PC-3 (cell line): ENCODE measurements at regions of chr11 and their contacts with region 1.

Region 1: DNA sequence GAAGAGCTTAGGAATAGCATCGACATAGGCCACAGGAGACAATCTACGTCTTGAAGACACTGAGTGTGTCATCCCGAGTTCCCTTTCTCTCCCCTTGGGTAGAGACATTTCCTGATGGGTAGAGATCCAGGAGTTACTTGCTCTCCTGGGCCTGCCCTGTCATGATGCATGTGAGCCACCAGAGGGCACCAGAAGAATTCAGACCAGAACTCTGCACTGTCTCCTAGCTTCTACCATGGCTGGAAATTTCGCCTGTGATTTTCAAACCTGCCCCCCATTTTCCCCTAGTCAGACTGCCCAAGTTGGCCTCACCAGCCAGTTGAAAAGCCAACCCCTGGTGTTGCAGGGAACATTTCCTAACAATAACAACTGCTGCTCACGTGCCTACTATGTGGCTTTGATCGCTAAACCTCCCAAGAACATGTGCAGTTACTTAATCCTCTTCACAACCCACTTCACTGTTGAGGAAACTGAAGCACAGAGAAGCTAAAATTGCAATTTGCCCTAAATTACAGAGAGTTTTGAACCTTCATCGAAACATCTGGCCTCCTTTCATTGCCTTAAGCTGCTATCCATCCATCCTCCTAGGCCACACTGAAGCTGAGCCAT is 47.2 kb downstream of the C11orf58 start:
- DNase-seq: peak; percentile 71
- ATAC-seq: peak; percentile 39
- H3K4me3 ChIP-seq: no peak overlapping the region
- H3K27ac ChIP-seq: no peak overlapping the region
- H3K4me1 ChIP-seq: peaks cover 37% of the 10 kb centered on the region
- H3K27me3 ChIP-seq: no peaks in the 10 kb centered on the region
- CTCF ChIP-seq: peak; percentile 83

Region 2: GRCh38 chr11:16820324-16821092 is 34.9 kb after region 1 on chr11:
- CTCF ChIA-PET with region 1: interaction called, 4 read pairs
- POLR2A ChIA-PET with region 1: no interaction called
- intact Hi-C with region 1: loop called (anchors 1 kb)
- DNase-seq: peak; percentile 86
- ATAC-seq: peak; percentile 77
- H3K4me3 ChIP-seq: no peak overlapping the region
- H3K27ac ChIP-seq: no peak overlapping the region
- H3K4me1 ChIP-seq: peaks cover 29% of the 10 kb centered on the region
- H3K27me3 ChIP-seq: no peaks in the 10 kb centered on the region
- CTCF ChIP-seq: peak; percentile 93

Region 3: GRCh38 chr11:16924826-16925560 is 139.4 kb after region 1 on chr11:
- CTCF ChIA-PET with region 1: interaction called, 3 read pairs
- POLR2A ChIA-PET with region 1: no interaction called
- intact Hi-C with region 1: loop called (anchors 2 kb)
- DNase-seq: peak; percentile 96
- ATAC-seq: peak; percentile 86
- H3K4me3 ChIP-seq: peak overlapping the region; percentile 89
- H3K27ac ChIP-seq: peak overlapping the region; percentile 69
- H3K4me1 ChIP-seq: peaks cover 31% of the 10 kb centered on the region
- H3K27me3 ChIP-seq: no peaks in the 10 kb centered on the region
- CTCF ChIP-seq: no peak